ENCODE measurements at regions of chr16 and their contacts with region 1.

Region 1: DNA sequence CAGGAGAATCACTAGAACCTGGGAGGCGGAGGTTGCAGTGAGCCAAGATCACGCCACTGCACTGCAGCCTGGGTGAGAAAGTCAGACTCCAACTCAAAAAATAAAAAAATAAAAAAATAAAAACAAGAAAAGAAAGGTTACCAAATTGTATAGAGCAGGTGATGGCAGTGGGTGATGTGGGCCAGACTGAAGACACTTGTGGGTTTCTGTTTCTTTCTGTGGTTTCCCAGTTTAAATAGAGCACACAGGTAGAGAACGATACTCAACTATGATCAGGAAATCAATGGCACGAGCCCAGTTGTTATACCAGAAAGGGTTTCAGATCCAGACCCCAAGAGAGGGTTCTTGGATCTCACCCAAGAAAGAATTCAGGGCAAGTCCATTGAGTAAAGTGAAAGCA is 32.6 kb downstream of the NUBP1 start:
- DNase-seq: peak; percentile 78
- ATAC-seq: peak; percentile 82
- H3K4me3 ChIP-seq: no peak overlapping the region
- H3K27ac ChIP-seq: no peak overlapping the region
- H3K4me1 ChIP-seq: peaks cover 29% of the 10 kb centered on the region
- H3K27me3 ChIP-seq: no peaks in the 10 kb centered on the region
- CTCF ChIP-seq: no peak
- EP300 ChIP-seq: peak; percentile 85
- POLR2A ChIP-seq: no peak
- RAD21 ChIP-seq: peak; percentile 13; the same call in 1 of the 2 replicates

Region 2: GRCh38 chr16:10729104-10730048 is 46.9 kb before region 1 on chr16:
- CTCF ChIA-PET with region 1: no interaction called
- POLR2A ChIA-PET with region 1: no interaction called
- RAD21 ChIA-PET with region 1: no interaction called
- SMC1A ChIA-PET with region 1: no interaction called
- in situ Hi-C with region 1: no loop called
- intact Hi-C with region 1: no loop called
- DNase-seq: no peak
- ATAC-seq: no peak
- H3K4me3 ChIP-seq: no peak overlapping the region
- H3K27ac ChIP-seq: no peak overlapping the region
- H3K4me1 ChIP-seq: no peaks in the 10 kb centered on the region
- H3K27me3 ChIP-seq: no peaks in the 10 kb centered on the region
- CTCF ChIP-seq: no peak
- EP300 ChIP-seq: no peak
- POLR2A ChIP-seq: no peak
- RAD21 ChIP-seq: no peak

Region 3: DNA sequence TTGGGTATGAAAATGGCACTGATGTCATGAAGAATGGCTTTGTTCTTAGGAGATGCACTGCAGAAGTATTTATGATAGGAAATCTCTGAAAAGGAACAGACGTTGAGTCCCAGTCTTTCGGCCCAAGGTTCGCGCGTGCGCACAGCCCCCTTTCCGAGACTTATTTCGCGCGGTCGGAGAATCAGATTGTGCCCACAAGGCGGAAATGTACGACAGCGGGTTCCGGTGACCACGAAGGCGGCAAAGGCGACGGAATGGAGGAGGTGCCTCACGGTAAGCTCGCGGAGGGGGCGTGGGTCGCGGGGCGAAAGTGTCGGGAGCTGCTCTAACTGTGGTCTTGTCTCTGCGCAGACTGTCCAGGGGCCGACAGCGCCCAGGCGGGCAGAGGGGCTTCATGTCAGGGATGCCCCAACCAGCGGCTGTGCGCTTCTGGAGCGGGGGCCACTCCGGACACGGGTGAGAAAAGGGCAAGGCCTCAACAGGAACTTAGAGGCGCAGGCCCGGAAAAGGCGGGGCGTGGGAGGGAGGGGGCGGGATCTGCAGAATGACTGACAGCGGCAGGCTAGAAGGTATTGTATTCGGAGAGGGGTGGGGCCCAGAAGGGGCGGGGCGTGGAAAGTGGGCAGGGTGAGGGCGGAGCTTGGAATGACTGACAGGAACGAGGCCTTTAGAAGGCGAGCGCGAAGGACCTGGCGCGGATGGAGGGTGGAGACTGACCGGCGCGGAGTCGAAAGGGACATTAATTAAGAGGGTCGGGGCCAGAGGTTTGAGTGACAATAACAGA is 32.5 kb before region 1 on chr16 and contains the start of gene NUBP1:
- CTCF ChIA-PET with region 1: no interaction called
- POLR2A ChIA-PET with region 1: interaction called, 14 read pairs
- RAD21 ChIA-PET with region 1: interaction called, 8 read pairs
- SMC1A ChIA-PET with region 1: interaction called, 7 read pairs
- in situ Hi-C with region 1: no loop called
- intact Hi-C with region 1: loop called (anchors 1 kb)
- DNase-seq: peak; percentile 94
- ATAC-seq: peak; percentile 93
- H3K4me3 ChIP-seq: peak within 1 kb of the TSS; percentile 69
- H3K27ac ChIP-seq: peak within 1 kb of the TSS; percentile 74
- H3K4me1 ChIP-seq: peaks cover 39% of the 10 kb centered on the region
- H3K27me3 ChIP-seq: no peaks in the 10 kb centered on the region
- CTCF ChIP-seq: peak in 1 of 3 experiments; percentile 8; a peak in 1 of 6 replicates
- EP300 ChIP-seq: 0 out of 4 replicates have a peak, but pooled peaks of 1 of the 2 experiments have one; percentile 4
- POLR2A ChIP-seq: peak; percentile 96
- RAD21 ChIP-seq: no peak
- polyA plus RNA-seq, gene NUBP1: 31.0 to 36.3 TPM

Region 4: GRCh38 chr16:10752843-10753523 is 23.3 kb before region 1 on chr16:
- CTCF ChIA-PET with region 1: interaction called, 6 read pairs
- POLR2A ChIA-PET with region 1: interaction called, 7 read pairs
- RAD21 ChIA-PET with region 1: interaction called, 27 read pairs
- SMC1A ChIA-PET with region 1: interaction called, 14 read pairs
- in situ Hi-C with region 1: no loop called
- intact Hi-C with region 1: loop called (anchors 1 kb)
- DNase-seq: peak; percentile 74
- ATAC-seq: peak; percentile 90
- H3K4me3 ChIP-seq: 0 out of 2 replicates have a peak overlapping the region, but pooled peaks have one; percentile 2
- H3K27ac ChIP-seq: peak overlapping the region; percentile 49
- H3K4me1 ChIP-seq: peaks cover 31% of the 10 kb centered on the region
- H3K27me3 ChIP-seq: no peaks in the 10 kb centered on the region
- CTCF ChIP-seq: no peak
- EP300 ChIP-seq: peak in 1 of 2 experiments; percentile 72; a peak in 2 of 4 replicates
- POLR2A ChIP-seq: no peak
- RAD21 ChIP-seq: no peak

Region 5: GRCh38 chr16:10812312-10813098 is 36.2 kb after region 1 on chr16:
- CTCF ChIA-PET with region 1: no interaction called
- POLR2A ChIA-PET with region 1: interaction called, 3 read pairs
- RAD21 ChIA-PET with region 1: interaction called, 3 read pairs
- SMC1A ChIA-PET with region 1: interaction called, 4 read pairs
- in situ Hi-C with region 1: no loop called
- intact Hi-C with region 1: loop called (anchors 1 kb)
- DNase-seq: peak; percentile 57
- ATAC-seq: peak; percentile 90
- H3K4me3 ChIP-seq: no peak overlapping the region
- H3K27ac ChIP-seq: peak overlapping the region; percentile 84
- H3K4me1 ChIP-seq: peaks cover 43% of the 10 kb centered on the region
- H3K27me3 ChIP-seq: no peaks in the 10 kb centered on the region
- CTCF ChIP-seq: peak; percentile 8 to 25 (median 23); a peak in 3 of 6 replicates
- EP300 ChIP-seq: peak; percentile 70 to 96; a peak in 3 of 4 replicates
- POLR2A ChIP-seq: no peak
- RAD21 ChIP-seq: peak; percentile 17; the same call in 1 of the 2 replicates

Region 6: GRCh38 chr16:10817963-10818941 is 42.0 kb after region 1 on chr16 and contains the start of gene TVP23A:
- CTCF ChIA-PET with region 1: interaction called, 3 read pairs
- POLR2A ChIA-PET with region 1: interaction called, 5 read pairs
- RAD21 ChIA-PET with region 1: interaction called, 12 read pairs
- SMC1A ChIA-PET with region 1: interaction called, 12 read pairs
- in situ Hi-C with region 1: no loop called
- intact Hi-C with region 1: no loop called
- DNase-seq: no peak
- ATAC-seq: no peak
- H3K4me3 ChIP-seq: no peak within 1 kb of the TSS
- H3K27ac ChIP-seq: peak within 1 kb of the TSS; percentile 38; the same call in 1 of the 2 replicates
- H3K4me1 ChIP-seq: peaks cover 37% of the 10 kb centered on the region
- H3K27me3 ChIP-seq: no peaks in the 10 kb centered on the region
- CTCF ChIP-seq: no peak
- EP300 ChIP-seq: no peak
- POLR2A ChIP-seq: no peak
- RAD21 ChIP-seq: no peak
- polyA plus RNA-seq, gene TVP23A: 4.6 to 6.4 TPM

Region 7: DNA sequence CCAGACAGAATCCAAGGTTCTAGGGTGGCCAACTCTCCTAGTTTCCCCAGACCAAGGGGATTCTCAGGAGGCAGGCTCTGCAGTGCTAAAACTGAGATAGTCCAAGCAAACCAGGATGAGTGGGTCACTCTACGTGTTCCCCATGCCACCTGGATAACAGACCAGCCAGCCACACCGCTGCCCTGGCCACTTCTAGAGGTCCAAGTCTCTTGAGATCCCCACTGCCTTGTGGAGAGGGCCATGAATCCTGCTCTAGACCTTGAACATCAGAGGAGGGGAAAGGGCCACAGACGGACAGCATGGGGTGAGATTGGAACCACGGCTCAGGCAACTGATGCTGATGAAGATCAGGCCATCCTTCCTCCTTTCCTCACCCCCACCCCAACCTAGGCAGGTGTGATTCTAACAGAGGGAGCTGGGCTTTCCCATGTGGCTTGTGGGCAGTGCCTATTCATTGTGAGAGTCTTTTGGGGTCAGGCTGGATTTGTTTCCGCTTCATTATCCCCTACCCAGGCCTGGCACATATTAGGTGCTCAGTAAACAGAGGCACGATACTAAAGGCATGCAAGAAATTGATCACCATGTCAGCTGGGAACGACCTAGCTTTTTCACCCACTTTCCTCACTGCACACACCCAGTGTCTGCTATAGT is 59.1 kb after region 1 on chr16:
- CTCF ChIA-PET with region 1: no interaction called
- POLR2A ChIA-PET with region 1: interaction called, 6 read pairs
- RAD21 ChIA-PET with region 1: interaction called, 7 read pairs
- SMC1A ChIA-PET with region 1: interaction called, 4 read pairs
- in situ Hi-C with region 1: no loop called
- intact Hi-C with region 1: loop called (anchors 2 kb)
- DNase-seq: peak; percentile 84
- ATAC-seq: peak; percentile 76
- H3K4me3 ChIP-seq: no peak overlapping the region
- H3K27ac ChIP-seq: peak overlapping the region; percentile 33
- H3K4me1 ChIP-seq: peaks cover 49% of the 10 kb centered on the region
- H3K27me3 ChIP-seq: no peaks in the 10 kb centered on the region
- CTCF ChIP-seq: no peak
- EP300 ChIP-seq: peak; percentile 86 to 89
- POLR2A ChIP-seq: no peak
- RAD21 ChIP-seq: no peak; the same call in 1 of the 2 replicates

Region 8: GRCh38 chr16:10888320-10888937 is 112.1 kb after region 1 on chr16:
- CTCF ChIA-PET with region 1: interaction called, 3 read pairs
- POLR2A ChIA-PET with region 1: interaction called, 4 read pairs
- RAD21 ChIA-PET with region 1: interaction called, 24 read pairs
- SMC1A ChIA-PET with region 1: interaction called, 16 read pairs
- in situ Hi-C with region 1: no loop called
- intact Hi-C with region 1: no loop called
- DNase-seq: no peak
- ATAC-seq: peak; percentile 7; the same call in 1 of the 3 replicates
- H3K4me3 ChIP-seq: peak overlapping the region; percentile 67
- H3K27ac ChIP-seq: peak overlapping the region; percentile 59
- H3K4me1 ChIP-seq: peaks cover 96% of the 10 kb centered on the region
- H3K27me3 ChIP-seq: no peaks in the 10 kb centered on the region
- CTCF ChIP-seq: no peak
- EP300 ChIP-seq: no peak; a peak in 1 of 4 replicates
- POLR2A ChIP-seq: no peak
- RAD21 ChIP-seq: 0 out of 2 replicates have a peak, but pooled peaks have one; percentile 17

Measured in GM12878 (cell line).